Activated CD4-positive, alpha-beta memory T cell treated with anti-CD3 and anti-CD28 coated beads, Interleukin-2, amount 10 ng/mL, durations not matched to agents 7 days and 5 days (primary cell): ENCODE measurements at regions of chr1 and their contacts with region 1.

Region 1: GRCh38 chr1:1217621-1218523 is 3.9 kb upstream of the TNFRSF4 start:
- DNase-seq: no peak
- H3K4me3 Mint-ChIP-seq: no peak overlapping the region
- H3K27ac Mint-ChIP-seq: peak overlapping the region; percentile 91
- H3K4me1 Mint-ChIP-seq: peaks cover 67% of the 10 kb centered on the region
- H3K27me3 Mint-ChIP-seq: no peaks in the 10 kb centered on the region

Region 2: GRCh38 chr1:1206376-1207260 is 11.3 kb before region 1 on chr1 and contains the start of gene TNFRSF18:
- CTCF ChIA-PET with region 1: no interaction called
- POLR2A ChIA-PET with region 1: interaction called, 65 read pairs
- DNase-seq: peak; percentile 62
- H3K4me3 Mint-ChIP-seq: peak within 1 kb of the TSS; percentile 78
- H3K27ac Mint-ChIP-seq: peak within 1 kb of the TSS; percentile 99
- H3K4me1 Mint-ChIP-seq: peaks cover 39% of the 10 kb centered on the region
- H3K27me3 Mint-ChIP-seq: no peaks in the 10 kb centered on the region
- total RNA-seq, gene TNFRSF18: 115 to 116 TPM

Region 3: GRCh38 chr1:1250786-1251284 is 33.0 kb after region 1 on chr1:
- CTCF ChIA-PET with region 1: no interaction called
- POLR2A ChIA-PET with region 1: no interaction called
- DNase-seq: peak; percentile 82
- H3K4me3 Mint-ChIP-seq: no peak overlapping the region
- H3K27ac Mint-ChIP-seq: peak overlapping the region; percentile 54
- H3K4me1 Mint-ChIP-seq: peaks cover 16% of the 10 kb centered on the region
- H3K27me3 Mint-ChIP-seq: peaks cover 4% of the 10 kb centered on the region